CD8-positive, alpha-beta T cell (primary cell): ENCODE measurements at regions of chr2 and their contacts with region 1.

Region 1: DNA sequence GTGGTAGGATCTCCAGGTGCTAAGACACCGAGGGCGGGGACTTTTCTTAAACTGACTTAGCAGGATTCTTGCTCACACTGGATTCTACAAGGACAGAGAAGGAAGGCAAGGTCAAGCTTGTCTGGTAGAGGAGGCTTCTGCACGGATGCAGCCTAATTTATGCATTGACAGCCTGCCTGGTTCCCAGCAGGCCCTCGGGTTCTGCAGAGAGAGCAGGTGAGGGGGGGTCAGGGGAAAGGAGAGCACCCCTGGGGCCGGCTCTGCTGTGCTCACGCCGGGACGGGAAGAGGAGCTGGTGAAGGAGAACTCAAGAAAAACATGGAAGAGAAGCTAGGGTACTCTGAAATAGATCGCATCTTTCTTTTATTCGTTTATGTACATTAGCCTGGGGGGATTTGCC is 46.4 kb downstream of the ADI1 start:
- DNase-seq: no peak
- ATAC-seq: no peak
- H3K4me3 ChIP-seq: no peak overlapping the region
- H3K4me3 Mint-ChIP-seq: no peak overlapping the region
- H3K27ac ChIP-seq: no peak overlapping the region
- H3K27ac Mint-ChIP-seq: no peak overlapping the region
- H3K4me1 ChIP-seq: no peaks in the 10 kb centered on the region
- H3K4me1 Mint-ChIP-seq: no peaks in the 10 kb centered on the region
- H3K27me3 ChIP-seq: no peaks in the 10 kb centered on the region
- H3K27me3 Mint-ChIP-seq: no peaks in the 10 kb centered on the region
- CTCF ChIP-seq: no peak

Region 2: DNA sequence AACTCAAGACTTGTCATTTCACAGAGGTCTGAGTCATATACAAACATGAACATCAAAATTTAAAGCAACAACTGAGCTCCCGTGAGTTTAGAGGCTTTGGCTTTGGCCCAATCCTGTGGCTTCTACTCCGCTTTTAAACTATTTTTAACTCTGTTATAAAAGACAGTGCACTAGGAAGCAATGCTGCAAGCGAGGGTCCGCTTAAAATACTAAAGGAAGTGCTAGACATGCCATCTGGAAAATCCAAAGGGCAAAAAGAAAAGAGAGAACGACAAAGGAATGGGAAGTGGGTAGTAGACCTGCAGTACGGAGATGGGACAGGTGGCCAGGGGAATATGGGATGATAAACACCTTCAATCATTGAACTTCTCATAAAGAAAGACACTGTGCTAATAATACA is 1104.5 kb before region 1 on chr2:
- CTCF ChIA-PET with region 1: no interaction called
- POLR2A ChIA-PET with region 1: no interaction called
- intact Hi-C with region 1: no loop called
- DNase-seq: no peak
- ATAC-seq: no peak
- H3K4me3 ChIP-seq: no peak overlapping the region
- H3K4me3 Mint-ChIP-seq: no peak overlapping the region
- H3K27ac ChIP-seq: no peak overlapping the region
- H3K27ac Mint-ChIP-seq: no peak overlapping the region
- H3K4me1 ChIP-seq: no peaks in the 10 kb centered on the region
- H3K4me1 Mint-ChIP-seq: no peaks in the 10 kb centered on the region
- H3K27me3 ChIP-seq: no peaks in the 10 kb centered on the region
- H3K27me3 Mint-ChIP-seq: no peaks in the 10 kb centered on the region
- CTCF ChIP-seq: no peak

Region 3: GRCh38 chr2:3062476-3063260 is 410.3 kb before region 1 on chr2:
- CTCF ChIA-PET with region 1: no interaction called
- POLR2A ChIA-PET with region 1: no interaction called
- intact Hi-C with region 1: no loop called
- DNase-seq: no peak
- ATAC-seq: no peak
- H3K4me3 ChIP-seq: no peak overlapping the region
- H3K4me3 Mint-ChIP-seq: no peak overlapping the region
- H3K27ac ChIP-seq: no peak overlapping the region
- H3K27ac Mint-ChIP-seq: no peak overlapping the region
- H3K4me1 ChIP-seq: no peaks in the 10 kb centered on the region
- H3K4me1 Mint-ChIP-seq: no peaks in the 10 kb centered on the region
- H3K27me3 ChIP-seq: peaks cover 0 to 2% of the 10 kb centered on the region in 2 experiments
- H3K27me3 Mint-ChIP-seq: peaks cover 11% of the 10 kb centered on the region
- CTCF ChIP-seq: no peak

Region 4: GRCh38 chr2:3461801-3462492 is 11.0 kb before region 1 on chr2:
- CTCF ChIA-PET with region 1: interaction called, 15 read pairs
- POLR2A ChIA-PET with region 1: no interaction called
- intact Hi-C with region 1: no loop called
- DNase-seq: peak in 5 of 9 experiments; percentile 13 to 70 (median 43)
- ATAC-seq: peak; percentile 91
- H3K4me3 ChIP-seq: no peak overlapping the region
- H3K4me3 Mint-ChIP-seq: no peak overlapping the region
- H3K27ac ChIP-seq: no peak overlapping the region
- H3K27ac Mint-ChIP-seq: peak overlapping the region; percentile 60
- H3K4me1 ChIP-seq: no peaks in the 10 kb centered on the region
- H3K4me1 Mint-ChIP-seq: peaks cover 6% of the 10 kb centered on the region
- H3K27me3 ChIP-seq: no peaks in the 10 kb centered on the region
- H3K27me3 Mint-ChIP-seq: no peaks in the 10 kb centered on the region
- CTCF ChIP-seq: peak; percentile 98